ENCODE measurements at regions of chr2 and their contacts with region 1.

Region 1: DNA sequence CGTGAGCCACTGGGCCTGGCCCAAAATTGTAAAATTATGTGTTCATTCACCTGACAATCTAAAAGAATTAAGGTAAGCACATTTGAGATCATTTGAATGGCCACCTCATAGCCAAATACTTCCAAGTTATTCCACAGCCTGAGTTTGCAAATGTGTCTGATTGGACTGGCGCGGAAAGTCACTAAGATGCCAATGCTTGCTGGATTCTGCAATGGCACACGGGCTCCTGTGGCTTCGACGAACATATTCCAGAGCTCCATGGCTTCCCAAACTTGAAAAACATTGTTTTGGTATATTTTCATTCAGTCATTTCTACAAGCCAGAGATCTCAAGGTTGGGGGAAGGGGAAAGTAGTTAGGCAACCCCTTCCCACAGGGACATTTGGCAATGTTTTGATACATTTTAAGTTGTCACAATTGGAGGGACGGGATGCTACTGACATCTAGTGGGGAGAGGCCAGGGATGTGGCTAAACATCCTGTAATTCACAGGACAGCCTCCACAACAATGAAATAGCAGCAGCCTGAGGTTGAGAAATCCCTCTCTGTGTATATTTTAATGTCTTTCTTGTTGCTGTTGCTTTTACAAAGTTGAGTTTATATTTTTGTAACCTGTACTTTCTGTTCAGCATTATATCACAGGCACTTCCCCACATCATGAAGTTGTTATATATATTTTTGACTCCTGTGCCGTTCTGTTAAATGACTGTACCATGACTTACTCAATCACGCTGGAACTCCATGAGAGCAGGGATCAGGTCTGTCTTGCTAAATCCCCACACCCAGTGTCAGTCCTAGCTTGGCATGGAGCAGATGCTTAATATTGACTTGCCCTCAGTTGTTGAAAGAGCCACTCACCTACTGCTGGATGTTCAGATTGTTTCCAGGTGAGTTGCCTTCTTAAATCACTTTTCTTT is 56.9 kb downstream of the COL4A4 start:
- DNase-seq: peak in 2 of 3 donors; percentile 26 to 58
- ATAC-seq: peak; percentile 91 to 99 (median 96)
- H3K4me3 ChIP-seq: no peak overlapping the region
- H3K27ac ChIP-seq: no peak overlapping the region
- H3K4me1 ChIP-seq: no peaks in the 10 kb centered on the region
- H3K27me3 ChIP-seq: no peaks in the 10 kb centered on the region
- CTCF ChIP-seq: peak; percentile 70 to 81 (median 80)
- POLR2A ChIP-seq: no peak

Region 2: GRCh38 chr2:226489775-226490541 is 617.1 kb before region 1 on chr2:
- intact Hi-C with region 1: no loop called
- DNase-seq: no peak
- ATAC-seq: no peak
- H3K4me3 ChIP-seq: no peak overlapping the region
- H3K27ac ChIP-seq: no peak overlapping the region
- H3K4me1 ChIP-seq: no peaks in the 10 kb centered on the region
- H3K27me3 ChIP-seq: no peaks in the 10 kb centered on the region
- CTCF ChIP-seq: no peak
- POLR2A ChIP-seq: no peak

Region 3: DNA sequence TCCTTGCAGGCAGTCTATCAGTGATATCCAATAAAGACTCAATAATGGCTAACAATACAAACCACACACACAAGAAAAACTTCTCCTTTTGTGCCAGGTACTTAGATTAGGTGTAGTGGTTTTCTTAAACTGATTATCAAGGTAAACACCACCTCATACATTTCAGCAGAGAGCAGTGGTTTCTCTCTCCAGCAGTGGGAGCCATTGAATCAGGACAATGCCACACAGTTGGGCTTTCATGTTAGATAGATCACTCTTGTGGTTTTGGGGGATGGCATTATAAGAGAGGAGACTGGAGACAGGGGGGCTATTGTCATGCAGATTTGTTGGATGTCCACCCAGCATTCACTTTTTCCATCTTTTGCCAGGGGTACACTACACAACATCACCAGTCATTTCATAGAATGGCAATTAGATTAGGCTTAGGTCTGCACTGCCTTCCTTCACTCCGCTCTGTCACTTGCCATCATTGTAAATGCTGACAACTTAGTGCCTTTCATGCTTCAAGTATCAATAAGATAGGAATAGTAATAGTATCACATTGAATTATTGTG is 293.9 kb before region 1 on chr2:
- intact Hi-C with region 1: no loop called
- DNase-seq: no peak
- ATAC-seq: peak in 1 of 4 donors; percentile 53
- H3K4me3 ChIP-seq: no peak overlapping the region
- H3K27ac ChIP-seq: no peak overlapping the region
- H3K4me1 ChIP-seq: no peaks in the 10 kb centered on the region
- H3K27me3 ChIP-seq: no peaks in the 10 kb centered on the region
- CTCF ChIP-seq: peak in 1 of 4 donors; percentile 26
- POLR2A ChIP-seq: no peak

Region 4: GRCh38 chr2:227033471-227034148 is 73.5 kb before region 1 on chr2:
- intact Hi-C with region 1: loop called in 1 of 2 experiments (anchors 10 kb)
- DNase-seq: peak; percentile 56 to 70 (median 61)
- ATAC-seq: peak; percentile 74 to 91 (median 88)
- H3K4me3 ChIP-seq: no peak overlapping the region
- H3K27ac ChIP-seq: no peak overlapping the region
- H3K4me1 ChIP-seq: peaks cover 0 to 3% (median 0%) of the 10 kb centered on the region in 4 donors
- H3K27me3 ChIP-seq: no peaks in the 10 kb centered on the region
- CTCF ChIP-seq: peak; percentile 34 to 71 (median 67)
- POLR2A ChIP-seq: no peak

Region 5: DNA sequence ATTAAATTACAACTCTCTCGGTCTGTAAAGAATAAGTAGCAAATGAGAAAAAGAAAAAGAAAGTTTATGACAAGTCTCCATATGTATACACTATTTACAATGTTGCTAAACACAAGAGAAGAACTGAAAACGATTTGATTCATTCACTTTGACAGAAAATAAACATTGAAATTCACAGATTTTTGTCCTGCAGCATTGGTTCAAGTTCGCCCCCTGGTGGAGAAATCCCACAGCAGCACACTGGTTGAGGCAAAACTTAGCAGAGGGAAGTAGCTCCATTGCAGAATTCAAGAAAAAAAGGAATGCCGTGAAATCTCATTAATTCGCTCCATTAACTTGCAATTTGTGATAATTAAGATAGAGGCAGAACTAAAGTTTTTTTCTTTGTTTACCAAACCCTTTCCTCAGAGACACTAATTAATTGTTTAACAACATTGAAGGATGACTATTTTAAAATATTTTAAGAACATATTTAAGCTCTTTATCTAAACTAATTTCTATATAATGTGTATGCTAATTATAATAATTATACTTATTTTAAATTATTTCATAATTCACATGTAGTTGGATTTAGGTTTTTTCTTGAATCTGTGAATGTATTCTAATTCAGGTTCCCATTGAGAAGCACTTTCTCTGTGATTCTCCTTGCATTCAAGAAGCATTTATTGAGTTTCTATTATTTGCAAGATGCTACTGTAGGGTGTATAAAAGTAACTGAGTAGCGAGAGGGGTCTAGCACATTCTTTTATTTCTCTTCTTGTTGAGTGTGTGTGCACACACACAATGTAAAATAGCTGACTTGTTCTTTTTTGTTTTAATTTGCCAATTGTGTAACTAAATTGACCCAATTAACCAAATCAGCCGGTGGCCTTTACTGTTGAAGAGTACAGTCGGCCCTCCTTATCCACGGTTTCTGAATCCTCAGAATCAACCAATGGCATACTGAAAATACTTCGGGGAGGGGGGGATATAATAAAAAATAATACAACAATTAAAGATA is 131.4 kb after region 1 on chr2:
- intact Hi-C with region 1: no loop called
- DNase-seq: peak in 2 of 3 donors; percentile 62 to 74
- ATAC-seq: peak; percentile 76 to 84 (median 82)
- H3K4me3 ChIP-seq: no peak overlapping the region
- H3K27ac ChIP-seq: no peak overlapping the region
- H3K4me1 ChIP-seq: no peaks in the 10 kb centered on the region
- H3K27me3 ChIP-seq: no peaks in the 10 kb centered on the region
- CTCF ChIP-seq: peak; percentile 88 to 98 (median 96)
- POLR2A ChIP-seq: no peak